ENCODE measurements at regions of chr13 and their contacts with region 1.

Region 1: GRCh38 chr13:39144941-39145533 is 106.8 kb downstream of the NHLRC3 start:
- DNase-seq: peak; percentile 70
- H3K4me3 Mint-ChIP-seq: no peak overlapping the region
- H3K27ac Mint-ChIP-seq: no peak overlapping the region
- H3K4me1 Mint-ChIP-seq: peaks cover 14% of the 10 kb centered on the region
- H3K27me3 Mint-ChIP-seq: peaks cover 26% of the 10 kb centered on the region

Region 2: GRCh38 chr13:39051157-39051556 is 93.9 kb before region 1 on chr13:
- intact Hi-C with region 1: loop called (anchors 5 kb)
- DNase-seq: no peak
- H3K4me3 Mint-ChIP-seq: no peak overlapping the region
- H3K27ac Mint-ChIP-seq: no peak overlapping the region
- H3K4me1 Mint-ChIP-seq: peaks cover 2% of the 10 kb centered on the region
- H3K27me3 Mint-ChIP-seq: no peaks in the 10 kb centered on the region

Region 3: GRCh38 chr13:39196958-39197646 is 52.1 kb after region 1 on chr13:
- intact Hi-C with region 1: loop called (anchors 2 kb)
- DNase-seq: no peak
- H3K4me3 Mint-ChIP-seq: peak overlapping the region; percentile 36
- H3K27ac Mint-ChIP-seq: peak overlapping the region; percentile 87
- H3K4me1 Mint-ChIP-seq: peaks cover 9% of the 10 kb centered on the region
- H3K27me3 Mint-ChIP-seq: peaks cover 9% of the 10 kb centered on the region

Region 4: DNA sequence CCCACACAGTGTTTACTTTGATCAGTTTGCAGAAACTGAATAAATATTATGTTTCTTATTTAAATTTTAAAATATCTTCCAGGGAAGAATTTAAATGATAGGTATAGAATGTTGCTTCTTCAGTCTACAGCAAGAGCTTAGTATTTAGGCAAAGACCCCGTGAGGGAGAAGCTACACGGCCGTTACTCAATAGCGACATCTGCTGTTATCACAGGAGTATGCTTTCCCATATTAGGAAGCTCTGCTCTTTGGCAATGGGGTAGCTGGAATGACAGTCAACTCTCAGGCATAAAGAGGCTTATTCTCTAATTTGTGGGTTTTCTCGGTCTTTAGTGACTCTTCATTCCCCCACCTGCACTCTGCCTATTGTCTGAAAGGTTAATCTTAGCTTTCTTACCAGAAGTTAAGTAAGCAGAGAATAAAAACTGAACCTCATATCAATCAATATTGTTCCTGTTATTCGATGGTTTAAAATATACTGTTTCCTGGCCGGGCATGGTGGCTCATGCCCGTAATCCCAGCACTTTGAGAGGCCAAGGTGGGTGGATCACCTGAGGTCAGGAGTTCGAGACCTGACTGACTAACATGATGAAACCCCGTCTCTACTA is 471.2 kb after region 1 on chr13:
- intact Hi-C with region 1: loop called (anchors 5 kb)
- DNase-seq: peak; percentile 81
- H3K4me3 Mint-ChIP-seq: no peak overlapping the region
- H3K27ac Mint-ChIP-seq: no peak overlapping the region
- H3K4me1 Mint-ChIP-seq: no peaks in the 10 kb centered on the region
- H3K27me3 Mint-ChIP-seq: peaks cover 24% of the 10 kb centered on the region

Region 5: GRCh38 chr13:39676315-39676876 is 531.4 kb after region 1 on chr13:
- intact Hi-C with region 1: loop called (anchors 10 kb)
- DNase-seq: peak; percentile 73
- H3K4me3 Mint-ChIP-seq: no peak overlapping the region
- H3K27ac Mint-ChIP-seq: no peak overlapping the region
- H3K4me1 Mint-ChIP-seq: no peaks in the 10 kb centered on the region
- H3K27me3 Mint-ChIP-seq: no peaks in the 10 kb centered on the region